A673 (cell line): ENCODE measurements at regions of chr6 and their contacts with region 1.

Region 1: GRCh38 chr6:25223490-25223991 is 55.6 kb upstream of the CARMIL1 start:
- DNase-seq: peak; percentile 78
- H3K4me3 ChIP-seq: no peak overlapping the region
- H3K27ac ChIP-seq: no peak overlapping the region
- H3K4me1 ChIP-seq: peaks cover 15% of the 10 kb centered on the region
- H3K27me3 ChIP-seq: no peaks in the 10 kb centered on the region
- CTCF ChIP-seq: peak; percentile 94

Region 2: DNA sequence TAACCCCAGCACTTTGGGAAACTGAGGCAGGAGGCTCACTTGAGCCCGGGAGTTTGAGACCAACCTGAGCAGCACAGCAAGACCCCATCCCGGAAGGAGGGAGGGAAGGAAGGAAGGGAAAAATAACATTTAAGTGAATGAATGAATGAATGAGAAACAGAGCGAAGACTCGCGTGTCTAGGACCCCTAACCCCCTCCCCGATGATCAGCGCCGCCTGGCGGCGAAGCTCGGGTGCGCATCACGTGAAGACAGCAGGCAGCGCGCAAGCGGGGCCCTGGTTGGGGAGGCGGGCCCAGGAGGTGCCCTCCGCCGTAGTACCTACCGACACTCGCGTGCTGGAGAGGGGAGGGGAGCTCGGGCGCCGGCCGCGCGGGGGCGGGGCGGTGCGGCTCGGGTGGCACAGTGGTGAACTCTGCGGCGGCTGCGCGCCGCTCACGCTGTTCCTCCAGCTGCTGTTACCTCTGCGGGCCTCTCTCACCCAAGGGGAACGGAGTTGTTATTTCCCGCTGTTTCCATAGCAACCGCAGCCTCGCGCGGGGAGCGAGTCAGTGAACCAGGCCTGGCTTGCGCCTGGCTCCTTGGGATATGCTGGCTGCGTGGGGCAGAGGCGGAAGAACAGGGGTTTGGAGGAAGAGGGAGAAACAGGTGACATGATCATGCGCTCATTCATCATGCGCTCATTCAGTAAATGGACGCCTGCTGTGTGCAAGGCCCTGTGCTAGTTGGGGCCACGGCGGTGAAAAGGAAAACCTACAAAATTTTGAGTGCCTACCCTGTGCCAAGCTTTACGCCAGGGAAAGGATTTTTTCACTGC is 863.7 kb before region 1 on chr6:
- CTCF ChIA-PET with region 1: no interaction called
- POLR2A ChIA-PET with region 1: no interaction called
- intact Hi-C with region 1: no loop called
- DNase-seq: peak; percentile 98
- H3K4me3 ChIP-seq: peak overlapping the region; percentile 41
- H3K27ac ChIP-seq: peak overlapping the region; percentile 81
- H3K4me1 ChIP-seq: peaks cover 25% of the 10 kb centered on the region
- H3K27me3 ChIP-seq: no peaks in the 10 kb centered on the region
- CTCF ChIP-seq: peak; percentile 95

Region 3: GRCh38 chr6:24734166-24734565 is 489.4 kb before region 1 on chr6:
- CTCF ChIA-PET with region 1: no interaction called
- POLR2A ChIA-PET with region 1: no interaction called
- intact Hi-C with region 1: no loop called
- DNase-seq: no peak
- H3K4me3 ChIP-seq: no peak overlapping the region
- H3K27ac ChIP-seq: no peak overlapping the region
- H3K4me1 ChIP-seq: no peaks in the 10 kb centered on the region
- H3K27me3 ChIP-seq: no peaks in the 10 kb centered on the region
- CTCF ChIP-seq: no peak

Region 4: DNA sequence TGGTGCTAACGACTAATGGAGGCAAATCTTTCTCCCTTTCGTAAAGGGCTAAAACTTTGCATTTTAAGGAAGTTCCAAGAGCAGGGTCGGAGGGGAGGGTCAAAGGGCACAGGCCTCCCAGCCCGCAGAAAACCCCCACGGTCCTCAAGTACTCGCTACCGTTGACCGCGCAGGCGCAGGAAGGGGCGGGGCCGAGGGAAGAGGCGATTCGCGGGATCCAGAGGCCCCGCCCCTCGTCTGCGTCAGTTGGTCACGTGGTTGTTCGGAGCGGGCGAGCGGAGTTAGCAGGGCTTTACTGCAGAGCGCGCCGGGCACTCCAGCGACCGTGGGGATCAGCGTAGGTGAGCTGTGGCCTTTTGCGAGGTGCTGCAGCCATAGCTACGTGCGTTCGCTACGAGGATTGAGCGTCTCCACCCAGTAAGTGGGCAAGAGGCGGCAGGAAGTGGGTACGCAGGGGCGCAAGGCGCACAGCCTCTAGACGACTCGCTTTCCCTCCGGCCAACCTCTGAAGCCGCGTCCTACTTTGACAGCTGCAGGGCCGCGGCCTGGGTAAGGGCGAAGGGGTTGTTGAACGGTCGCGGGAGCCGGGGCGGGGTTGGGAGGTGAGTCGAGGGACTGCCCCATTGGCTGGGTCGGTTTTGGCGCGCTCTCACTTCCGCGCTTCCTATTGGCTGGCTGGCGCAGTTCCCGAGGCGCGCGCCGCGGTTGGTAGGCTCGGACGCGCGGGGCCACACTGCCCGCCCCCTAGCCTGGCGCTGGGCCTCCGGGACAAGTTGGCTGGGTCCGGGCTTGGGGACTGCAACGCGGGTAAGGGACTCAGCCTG is 448.6 kb before region 1 on chr6 and contains the start of gene GMNN:
- CTCF ChIA-PET with region 1: no interaction called
- POLR2A ChIA-PET with region 1: no interaction called
- intact Hi-C with region 1: no loop called
- DNase-seq: peak; percentile 98
- H3K4me3 ChIP-seq: peak within 1 kb of the TSS; percentile 76
- H3K27ac ChIP-seq: peak within 1 kb of the TSS; percentile 99
- H3K4me1 ChIP-seq: peaks cover 10% of the 10 kb centered on the region
- H3K27me3 ChIP-seq: no peaks in the 10 kb centered on the region
- CTCF ChIP-seq: no peak
- total RNA-seq, gene GMNN: 100 and 111 TPM in 2 replicates

Region 5: GRCh38 chr6:25147223-25147622 is 76.3 kb before region 1 on chr6:
- CTCF ChIA-PET with region 1: no interaction called
- POLR2A ChIA-PET with region 1: no interaction called
- intact Hi-C with region 1: no loop called
- DNase-seq: no peak
- H3K4me3 ChIP-seq: no peak overlapping the region
- H3K27ac ChIP-seq: no peak overlapping the region
- H3K4me1 ChIP-seq: no peaks in the 10 kb centered on the region
- H3K27me3 ChIP-seq: no peaks in the 10 kb centered on the region
- CTCF ChIP-seq: no peak

Region 6: GRCh38 chr6:25490018-25490801 is 266.7 kb after region 1 on chr6:
- CTCF ChIA-PET with region 1: interaction called, 14 read pairs
- POLR2A ChIA-PET with region 1: no interaction called
- intact Hi-C with region 1: no loop called
- DNase-seq: peak; percentile 89
- H3K4me3 ChIP-seq: no peak overlapping the region
- H3K27ac ChIP-seq: no peak overlapping the region
- H3K4me1 ChIP-seq: peaks cover 15% of the 10 kb centered on the region
- H3K27me3 ChIP-seq: no peaks in the 10 kb centered on the region
- CTCF ChIP-seq: peak; percentile 90

Region 7: DNA sequence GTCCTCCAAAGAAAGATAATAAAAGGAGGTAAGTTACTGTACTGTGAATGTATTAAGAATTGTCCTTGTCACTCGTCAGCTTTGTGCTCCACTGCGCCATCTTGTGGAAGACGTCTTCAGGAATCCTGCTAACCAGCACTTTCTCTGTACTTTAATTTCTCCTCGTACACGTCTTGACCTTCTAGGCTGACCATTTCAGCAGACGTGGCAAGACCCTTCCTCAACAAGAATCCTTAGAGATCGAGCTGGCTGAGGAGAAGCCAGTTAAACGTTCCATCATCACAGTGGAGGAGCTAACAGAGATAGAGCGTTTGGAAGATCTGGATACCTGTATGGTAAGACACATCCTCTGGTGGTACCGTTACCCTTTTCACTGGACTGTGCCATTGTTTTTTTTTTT is 333.0 kb after region 1 on chr6:
- CTCF ChIA-PET with region 1: interaction called, 7 read pairs
- POLR2A ChIA-PET with region 1: no interaction called
- intact Hi-C with region 1: loop called (anchors 5 kb)
- DNase-seq: peak; percentile 77
- H3K4me3 ChIP-seq: no peak overlapping the region
- H3K27ac ChIP-seq: no peak overlapping the region
- H3K4me1 ChIP-seq: no peaks in the 10 kb centered on the region
- H3K27me3 ChIP-seq: no peaks in the 10 kb centered on the region
- CTCF ChIP-seq: peak; percentile 88

Region 8: DNA sequence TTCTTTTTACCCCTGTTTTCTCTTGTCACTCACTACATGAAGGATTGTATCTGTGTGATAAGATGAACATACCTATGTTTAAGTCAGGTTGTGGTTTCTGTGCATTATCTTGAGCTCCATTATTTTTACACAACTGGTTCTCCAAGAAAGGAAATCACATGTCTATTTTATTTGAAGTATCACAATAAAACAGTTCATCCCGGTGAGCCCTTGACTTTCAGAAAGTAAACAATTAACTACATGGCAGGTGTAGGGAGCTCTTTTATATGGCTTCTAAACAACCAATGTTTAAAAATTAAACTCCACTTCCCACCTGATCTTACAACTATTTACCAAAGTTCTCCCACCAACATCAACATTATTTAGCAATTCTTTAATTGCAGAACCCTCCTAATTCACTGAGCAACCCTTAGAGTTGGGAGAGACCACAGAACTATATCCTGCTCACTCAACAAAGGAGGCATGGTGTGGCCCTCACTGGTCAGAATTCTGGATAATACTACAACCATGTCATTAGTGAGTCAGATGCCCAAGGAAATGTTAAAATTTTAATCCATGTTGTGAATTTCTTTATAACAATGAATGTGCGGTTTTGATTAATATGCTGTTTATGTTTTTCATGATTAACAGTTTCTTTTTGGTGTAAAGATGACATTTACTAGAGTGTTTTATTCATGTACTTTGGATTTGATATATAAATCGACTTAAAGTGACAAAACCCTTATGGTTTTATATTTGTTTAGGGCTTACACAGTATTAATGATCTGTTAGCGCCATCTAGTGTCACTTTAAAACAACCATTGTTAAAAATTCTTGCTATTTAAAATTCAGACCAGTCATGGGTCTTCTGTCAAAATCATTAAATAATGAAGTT is 378.5 kb after region 1 on chr6:
- CTCF ChIA-PET with region 1: no interaction called
- POLR2A ChIA-PET with region 1: no interaction called
- intact Hi-C with region 1: loop called (anchors 1 kb)
- DNase-seq: peak; percentile 66
- H3K4me3 ChIP-seq: no peak overlapping the region
- H3K27ac ChIP-seq: no peak overlapping the region
- H3K4me1 ChIP-seq: no peaks in the 10 kb centered on the region
- H3K27me3 ChIP-seq: no peaks in the 10 kb centered on the region
- CTCF ChIP-seq: peak; percentile 64

Region 9: DNA sequence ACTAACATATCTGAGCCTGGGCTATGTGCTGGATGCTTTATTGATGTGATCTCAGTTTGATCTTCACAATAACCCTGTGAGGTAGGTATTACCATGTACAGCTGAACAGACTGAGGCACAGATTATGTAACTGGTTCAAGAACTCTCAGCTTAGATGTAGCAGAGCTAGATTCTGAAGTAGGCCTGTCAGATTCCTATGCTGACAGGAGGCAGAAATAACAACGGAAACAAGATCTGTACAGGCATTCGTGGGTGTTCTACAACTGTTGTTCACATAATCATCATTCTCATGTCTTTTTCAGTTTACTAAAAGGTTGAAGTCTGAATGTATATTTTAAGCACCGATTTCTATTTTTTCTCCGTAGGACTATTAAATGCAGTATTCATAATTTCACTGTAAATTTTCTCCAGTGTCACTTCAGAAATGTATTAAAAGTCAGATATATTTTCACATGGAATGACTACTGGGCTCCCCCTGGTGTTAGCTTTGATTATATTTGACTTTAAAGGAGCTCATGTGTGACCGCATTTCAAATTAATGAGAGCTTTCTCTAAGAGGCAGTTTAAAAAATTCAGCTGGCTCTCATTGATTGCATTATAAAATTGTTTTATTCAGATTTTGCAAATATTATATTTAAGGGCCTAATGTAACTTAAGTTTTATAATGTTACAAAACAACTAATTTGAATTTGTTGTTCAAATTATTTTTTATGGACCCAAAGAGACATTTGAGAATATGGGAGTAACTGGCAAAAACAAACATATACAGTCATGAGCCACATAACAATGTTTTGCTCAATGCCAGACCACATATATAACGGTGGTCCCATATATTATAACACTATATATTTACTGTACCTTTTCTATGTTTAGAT is 494.6 kb after region 1 on chr6:
- CTCF ChIA-PET with region 1: interaction called, 12 read pairs
- POLR2A ChIA-PET with region 1: no interaction called
- intact Hi-C with region 1: loop called (anchors 5 kb)
- DNase-seq: peak; percentile 60
- H3K4me3 ChIP-seq: no peak overlapping the region
- H3K27ac ChIP-seq: no peak overlapping the region
- H3K4me1 ChIP-seq: peaks cover 17% of the 10 kb centered on the region
- H3K27me3 ChIP-seq: no peaks in the 10 kb centered on the region
- CTCF ChIP-seq: peak; percentile 70

Region 10: DNA sequence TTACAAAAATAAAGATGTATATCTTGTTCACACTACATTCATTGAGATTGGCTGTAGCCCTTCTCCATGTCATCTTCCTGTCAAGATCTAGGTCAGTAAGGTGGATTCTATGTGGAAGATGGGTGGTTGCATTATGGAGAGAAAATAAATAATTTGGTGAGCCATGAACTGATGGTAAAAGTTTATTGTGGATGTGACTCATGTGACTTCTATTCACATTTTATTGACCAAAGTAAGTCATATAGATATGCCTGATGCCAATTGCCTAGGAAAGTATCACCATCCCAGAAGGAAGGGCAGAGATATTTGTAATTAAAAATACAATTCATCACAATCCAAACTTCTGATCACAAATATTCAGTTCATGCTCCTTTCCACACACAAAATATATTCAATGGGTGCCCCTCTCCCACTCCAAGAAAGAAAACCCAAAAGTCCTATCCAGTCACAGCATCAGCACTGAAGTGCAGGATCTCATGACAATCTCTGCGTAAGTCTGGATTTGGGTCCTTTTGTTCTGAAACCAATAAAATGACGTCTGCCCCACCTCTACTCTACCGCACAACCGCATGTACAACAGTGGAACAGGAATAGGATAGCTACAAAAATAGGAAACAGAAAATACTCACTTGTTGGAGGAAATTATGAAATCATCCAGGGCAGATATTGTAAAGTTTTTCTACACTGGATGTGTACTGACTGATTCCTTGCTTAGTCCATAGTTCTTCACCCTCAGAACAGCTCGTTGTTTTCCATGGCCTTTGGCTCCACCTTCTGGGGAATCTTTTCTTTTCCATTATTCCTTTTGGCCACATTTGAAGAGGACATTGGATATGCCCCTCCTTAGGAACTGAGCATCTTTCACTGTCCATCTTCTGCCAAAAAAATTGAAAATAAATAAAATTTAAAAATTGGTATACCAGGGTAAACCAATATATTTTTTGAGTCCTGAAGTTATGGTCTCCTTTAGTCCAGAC is 666.6 kb after region 1 on chr6:
- CTCF ChIA-PET with region 1: no interaction called
- POLR2A ChIA-PET with region 1: no interaction called
- intact Hi-C with region 1: loop called (anchors 5 kb)
- DNase-seq: peak; percentile 66
- H3K4me3 ChIP-seq: no peak overlapping the region
- H3K27ac ChIP-seq: no peak overlapping the region
- H3K4me1 ChIP-seq: no peaks in the 10 kb centered on the region
- H3K27me3 ChIP-seq: no peaks in the 10 kb centered on the region
- CTCF ChIP-seq: peak; percentile 58